ENCODE measurements at regions of chr15 and their contacts with region 1.

Region 1: GRCh38 chr15:73560501-73561117 is 72.6 kb downstream of the NPTN start:
- DNase-seq: peak; percentile 51
- H3K4me3 ChIP-seq: no peak overlapping the region
- H3K27ac ChIP-seq: no peak overlapping the region
- H3K4me1 ChIP-seq: peaks cover 8% of the 10 kb centered on the region
- H3K27me3 ChIP-seq: no peaks in the 10 kb centered on the region
- CTCF ChIP-seq: peak; percentile 36 to 49

Region 2: GRCh38 chr15:73305331-73306211 is 255.0 kb before region 1 on chr15:
- CTCF ChIA-PET with region 1: no interaction called
- dilution Hi-C with region 1: no loop called
- in situ Hi-C with region 1: no loop called
- intact Hi-C with region 1: loop called (anchors 5 kb)
- DNase-seq: peak; percentile 75
- H3K4me3 ChIP-seq: no peak overlapping the region
- H3K27ac ChIP-seq: no peak overlapping the region
- H3K4me1 ChIP-seq: peaks cover 7% of the 10 kb centered on the region
- H3K27me3 ChIP-seq: no peaks in the 10 kb centered on the region
- CTCF ChIP-seq: peak; percentile 77 to 83

Region 3: DNA sequence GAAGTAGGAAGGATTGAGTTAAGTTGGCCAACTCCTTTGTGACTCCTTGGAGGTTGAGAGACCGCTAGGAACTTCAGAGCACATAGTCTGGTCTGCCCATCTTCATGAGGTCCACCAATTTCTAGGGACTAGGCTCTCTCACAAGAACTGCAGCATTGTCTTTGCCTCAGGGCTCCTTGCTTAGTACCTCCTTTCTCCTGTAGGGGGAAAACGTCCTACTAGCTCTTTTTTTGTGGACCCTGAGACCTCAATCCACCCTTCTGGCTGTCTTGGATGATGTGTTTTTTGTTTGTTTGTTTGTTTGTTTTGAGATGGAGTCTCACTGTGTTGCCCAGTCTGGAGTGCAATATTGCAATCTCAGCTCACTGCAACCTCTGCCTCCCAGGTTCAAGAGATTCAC is 96.0 kb before region 1 on chr15:
- CTCF ChIA-PET with region 1: no interaction called
- dilution Hi-C with region 1: loop called (anchors 25 kb)
- in situ Hi-C with region 1: no loop called
- intact Hi-C with region 1: no loop called
- DNase-seq: no peak
- H3K4me3 ChIP-seq: no peak overlapping the region
- H3K27ac ChIP-seq: no peak overlapping the region
- H3K4me1 ChIP-seq: no peaks in the 10 kb centered on the region
- H3K27me3 ChIP-seq: no peaks in the 10 kb centered on the region
- CTCF ChIP-seq: peak; percentile 26 to 39

Region 4: GRCh38 chr15:73601451-73602445 is 41.1 kb after region 1 on chr15:
- CTCF ChIA-PET with region 1: no interaction called
- dilution Hi-C with region 1: loop called (anchors 5 kb)
- in situ Hi-C with region 1: no loop called
- intact Hi-C with region 1: no loop called
- DNase-seq: peak; percentile 42
- H3K4me3 ChIP-seq: no peak overlapping the region
- H3K27ac ChIP-seq: peak overlapping the region; percentile 78
- H3K4me1 ChIP-seq: peaks cover 51% of the 10 kb centered on the region
- H3K27me3 ChIP-seq: no peaks in the 10 kb centered on the region
- CTCF ChIP-seq: no peak

Region 5: GRCh38 chr15:73781038-73781925 is 220.7 kb after region 1 on chr15:
- CTCF ChIA-PET with region 1: no interaction called
- dilution Hi-C with region 1: no loop called
- in situ Hi-C with region 1: no loop called
- intact Hi-C with region 1: loop called (anchors 10 kb)
- DNase-seq: peak; percentile 34
- H3K4me3 ChIP-seq: no peak overlapping the region
- H3K27ac ChIP-seq: no peak overlapping the region
- H3K4me1 ChIP-seq: peaks cover 13% of the 10 kb centered on the region
- H3K27me3 ChIP-seq: no peaks in the 10 kb centered on the region
- CTCF ChIP-seq: peak; percentile 38 to 54

Region 6: GRCh38 chr15:73950831-73951561 is 390.4 kb after region 1 on chr15:
- CTCF ChIA-PET with region 1: no interaction called
- dilution Hi-C with region 1: no loop called
- in situ Hi-C with region 1: no loop called
- intact Hi-C with region 1: no loop called
- DNase-seq: peak; percentile 78
- H3K4me3 ChIP-seq: no peak overlapping the region
- H3K27ac ChIP-seq: peak overlapping the region; percentile 11
- H3K4me1 ChIP-seq: peaks cover 14% of the 10 kb centered on the region
- H3K27me3 ChIP-seq: no peaks in the 10 kb centered on the region
- CTCF ChIP-seq: peak; percentile 65 to 82

Measured in mammary epithelial cell (primary cell).